CD4-positive, alpha-beta memory T cell (primary cell): ENCODE measurements at regions of chr1 and their contacts with region 1.

Region 1: GRCh38 chr1:91165033-91165654 is 143.3 kb upstream of the ZNF644 start:
- DNase-seq: peak; percentile 29 to 49 (median 43)
- H3K4me3 ChIP-seq: no peak overlapping the region
- H3K4me3 Mint-ChIP-seq: no peak overlapping the region
- H3K27ac ChIP-seq: no peak overlapping the region
- H3K27ac Mint-ChIP-seq: peak overlapping the region in 1 of 7 donors; percentile 51
- H3K4me1 ChIP-seq: no peaks in the 10 kb centered on the region
- H3K4me1 Mint-ChIP-seq: peaks cover 0 to 12% (median 1%) of the 10 kb centered on the region in 4 donors
- H3K27me3 ChIP-seq: no peaks in the 10 kb centered on the region
- H3K27me3 Mint-ChIP-seq: no peaks in the 10 kb centered on the region

Region 2: DNA sequence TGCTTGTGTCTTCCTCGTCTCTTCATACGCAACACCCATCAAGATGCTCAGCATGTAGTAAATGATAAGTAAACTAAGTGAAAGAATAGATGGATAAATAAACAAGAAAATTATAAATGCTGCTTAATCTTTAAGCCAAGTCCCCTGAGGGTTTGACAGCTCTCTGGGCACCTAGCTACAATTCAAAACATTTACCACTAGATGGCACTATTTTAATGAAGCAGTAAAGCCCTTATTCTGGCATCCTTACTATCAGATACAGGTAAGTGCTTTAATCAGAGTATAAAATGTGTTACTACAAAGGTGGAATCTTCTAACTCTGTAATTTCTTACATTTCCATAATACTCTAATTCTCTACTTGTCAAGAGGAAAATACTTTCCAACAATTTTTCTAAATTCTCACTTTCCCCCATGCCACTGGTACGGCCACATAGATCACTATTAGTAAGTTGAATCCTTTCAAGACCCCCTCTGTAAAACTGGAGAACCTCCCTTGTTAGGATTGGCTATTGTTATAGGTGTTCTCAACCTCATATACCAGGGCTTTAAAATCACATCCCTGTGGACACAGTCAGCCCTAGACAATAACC is 585.8 kb before region 1 on chr1:
- CTCF ChIA-PET with region 1: interaction called, 45 read pairs
- POLR2A ChIA-PET with region 1: no interaction called
- intact Hi-C with region 1: no loop called
- DNase-seq: peak in 4 of 5 donors; percentile 35 to 41 (median 38)
- H3K4me3 ChIP-seq: no peak overlapping the region
- H3K4me3 Mint-ChIP-seq: no peak overlapping the region
- H3K27ac ChIP-seq: no peak overlapping the region
- H3K27ac Mint-ChIP-seq: no peak overlapping the region
- H3K4me1 ChIP-seq: no peaks in the 10 kb centered on the region
- H3K4me1 Mint-ChIP-seq: no peaks in the 10 kb centered on the region
- H3K27me3 ChIP-seq: no peaks in the 10 kb centered on the region
- H3K27me3 Mint-ChIP-seq: peaks cover 1 to 8% of the 10 kb centered on the region in 2 donors

Region 3: GRCh38 chr1:91007827-91008226 is 157.3 kb before region 1 on chr1:
- CTCF ChIA-PET with region 1: interaction called, 12 read pairs
- POLR2A ChIA-PET with region 1: no interaction called
- intact Hi-C with region 1: no loop called
- DNase-seq: no peak
- H3K4me3 ChIP-seq: no peak overlapping the region
- H3K4me3 Mint-ChIP-seq: peak overlapping the region in 2 of 8 donors; percentile 10 to 50
- H3K27ac ChIP-seq: no peak overlapping the region
- H3K27ac Mint-ChIP-seq: peak overlapping the region in 2 of 7 donors; percentile 8 to 29
- H3K4me1 ChIP-seq: peaks cover 79% of the 10 kb centered on the region
- H3K4me1 Mint-ChIP-seq: peaks cover 70 to 83% (median 76%) of the 10 kb centered on the region in 4 donors
- H3K27me3 ChIP-seq: no peaks in the 10 kb centered on the region
- H3K27me3 Mint-ChIP-seq: no peaks in the 10 kb centered on the region

Region 4: DNA sequence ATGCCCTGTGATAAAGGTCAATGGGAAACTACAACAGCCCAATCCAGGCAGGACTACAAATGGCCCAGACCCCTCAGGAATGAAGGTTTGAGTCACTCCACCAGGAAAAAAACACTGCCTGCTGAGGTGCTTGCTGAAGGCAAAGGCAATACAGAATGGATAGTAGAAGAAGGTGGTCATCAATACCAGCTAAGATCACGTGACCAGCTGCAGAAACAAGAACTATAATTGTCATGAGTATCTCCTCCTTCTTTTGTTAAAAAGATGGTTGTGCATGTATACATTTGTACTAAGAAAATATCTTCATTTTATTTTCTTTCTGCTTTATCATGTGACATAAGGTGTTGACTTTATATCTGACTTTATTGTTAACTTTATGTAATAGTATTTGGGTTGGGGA is 119.9 kb before region 1 on chr1:
- CTCF ChIA-PET with region 1: no interaction called
- POLR2A ChIA-PET with region 1: no interaction called
- intact Hi-C with region 1: no loop called
- DNase-seq: no peak
- H3K4me3 ChIP-seq: no peak overlapping the region
- H3K4me3 Mint-ChIP-seq: no peak overlapping the region
- H3K27ac ChIP-seq: no peak overlapping the region
- H3K27ac Mint-ChIP-seq: peak overlapping the region in 1 of 7 donors; percentile 32
- H3K4me1 ChIP-seq: no peaks in the 10 kb centered on the region
- H3K4me1 Mint-ChIP-seq: no peaks in the 10 kb centered on the region
- H3K27me3 ChIP-seq: no peaks in the 10 kb centered on the region
- H3K27me3 Mint-ChIP-seq: peaks cover 0 to 2% of the 10 kb centered on the region in 2 donors

Region 5: DNA sequence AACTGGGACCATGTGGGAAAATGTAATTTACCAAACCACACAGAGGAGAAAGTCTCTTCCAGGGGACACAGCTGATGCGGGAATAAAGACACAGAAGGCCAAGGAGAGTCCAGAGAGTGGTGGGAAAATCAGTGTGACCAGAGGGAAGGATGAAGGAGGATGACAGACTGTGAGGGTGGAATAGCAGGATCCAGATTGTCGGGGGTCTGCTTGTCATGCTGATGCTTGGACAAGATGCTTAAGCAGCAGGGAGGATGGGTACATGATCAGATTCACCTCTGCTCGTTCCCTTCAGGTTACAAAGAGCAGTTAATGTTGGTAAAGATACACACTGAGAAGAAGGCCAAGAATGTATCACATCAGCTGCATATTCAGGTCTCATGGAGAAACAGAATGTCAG is 26.2 kb before region 1 on chr1:
- CTCF ChIA-PET with region 1: interaction called, 15 read pairs
- POLR2A ChIA-PET with region 1: no interaction called
- intact Hi-C with region 1: no loop called
- DNase-seq: no peak
- H3K4me3 ChIP-seq: no peak overlapping the region
- H3K4me3 Mint-ChIP-seq: no peak overlapping the region
- H3K27ac ChIP-seq: no peak overlapping the region
- H3K27ac Mint-ChIP-seq: no peak overlapping the region
- H3K4me1 ChIP-seq: no peaks in the 10 kb centered on the region
- H3K4me1 Mint-ChIP-seq: peaks cover 0 to 4% (median under 1%) of the 10 kb centered on the region in 4 donors
- H3K27me3 ChIP-seq: no peaks in the 10 kb centered on the region
- H3K27me3 Mint-ChIP-seq: peaks cover 4 to 5% of the 10 kb centered on the region in 2 donors

Region 6: GRCh38 chr1:91176250-91176649 is 11.1 kb after region 1 on chr1:
- CTCF ChIA-PET with region 1: interaction called, 10 read pairs
- POLR2A ChIA-PET with region 1: no interaction called
- intact Hi-C with region 1: no loop called
- DNase-seq: no peak
- H3K4me3 ChIP-seq: no peak overlapping the region
- H3K4me3 Mint-ChIP-seq: no peak overlapping the region
- H3K27ac ChIP-seq: no peak overlapping the region
- H3K27ac Mint-ChIP-seq: no peak overlapping the region
- H3K4me1 ChIP-seq: no peaks in the 10 kb centered on the region
- H3K4me1 Mint-ChIP-seq: no peaks in the 10 kb centered on the region
- H3K27me3 ChIP-seq: peaks cover 3% of the 10 kb centered on the region
- H3K27me3 Mint-ChIP-seq: peaks cover 15 to 18% of the 10 kb centered on the region in 2 donors

Region 7: GRCh38 chr1:91282695-91283420 is 117.7 kb after region 1 on chr1:
- CTCF ChIA-PET with region 1: interaction called, 4 read pairs
- POLR2A ChIA-PET with region 1: no interaction called
- intact Hi-C with region 1: loop called (anchors 5 kb)
- DNase-seq: peak; percentile 32 to 38 (median 33)
- H3K4me3 ChIP-seq: no peak overlapping the region
- H3K4me3 Mint-ChIP-seq: no peak overlapping the region
- H3K27ac ChIP-seq: no peak overlapping the region
- H3K27ac Mint-ChIP-seq: no peak overlapping the region
- H3K4me1 ChIP-seq: no peaks in the 10 kb centered on the region
- H3K4me1 Mint-ChIP-seq: no peaks in the 10 kb centered on the region
- H3K27me3 ChIP-seq: no peaks in the 10 kb centered on the region
- H3K27me3 Mint-ChIP-seq: peaks cover 3 to 9% of the 10 kb centered on the region in 2 donors

Region 8: DNA sequence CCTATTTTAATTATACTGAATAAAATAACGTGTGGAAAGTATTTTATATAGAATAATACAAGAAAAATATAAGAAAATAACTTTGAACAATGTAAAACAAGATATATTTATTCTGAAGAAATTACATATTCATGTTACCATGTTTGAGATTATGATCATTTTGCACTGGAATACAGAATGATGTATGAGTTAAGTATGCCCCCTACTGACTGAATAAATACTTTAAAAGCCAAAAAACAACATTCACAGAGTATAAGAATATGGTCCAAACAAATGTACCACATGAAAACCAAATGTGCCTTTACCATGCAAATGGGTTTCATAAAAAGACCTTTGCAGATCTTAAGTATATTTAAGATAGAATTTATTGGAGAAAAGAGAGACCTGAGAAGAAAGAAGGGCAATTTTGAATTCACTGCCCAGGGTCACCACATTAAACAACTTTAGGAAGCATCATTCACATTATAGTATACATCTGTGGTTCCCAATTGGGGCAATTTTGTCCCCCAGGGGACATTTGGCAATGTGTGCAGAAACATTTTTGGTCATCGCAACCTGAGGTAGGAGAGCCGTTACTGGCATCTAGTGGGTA is 1458.1 kb after region 1 on chr1:
- CTCF ChIA-PET with region 1: no interaction called
- POLR2A ChIA-PET with region 1: no interaction called
- intact Hi-C with region 1: loop called (anchors 5 kb)
- DNase-seq: peak in 4 of 5 donors; percentile 29 to 42 (median 36)
- H3K4me3 ChIP-seq: no peak overlapping the region
- H3K4me3 Mint-ChIP-seq: no peak overlapping the region
- H3K27ac ChIP-seq: no peak overlapping the region
- H3K27ac Mint-ChIP-seq: no peak overlapping the region
- H3K4me1 ChIP-seq: no peaks in the 10 kb centered on the region
- H3K4me1 Mint-ChIP-seq: no peaks in the 10 kb centered on the region
- H3K27me3 ChIP-seq: no peaks in the 10 kb centered on the region
- H3K27me3 Mint-ChIP-seq: no peaks in the 10 kb centered on the region